A673 (cell line): ENCODE measurements at regions of chr4 and their contacts with region 1.

Region 1: GRCh38 chr4:149370785-149371420 is 444.7 kb downstream of the IQCM start:
- DNase-seq: peak; percentile 87
- H3K4me3 ChIP-seq: no peak overlapping the region
- H3K27ac ChIP-seq: no peak overlapping the region
- H3K4me1 ChIP-seq: peaks cover 6% of the 10 kb centered on the region
- H3K27me3 ChIP-seq: no peaks in the 10 kb centered on the region
- CTCF ChIP-seq: peak; percentile 65

Region 2: DNA sequence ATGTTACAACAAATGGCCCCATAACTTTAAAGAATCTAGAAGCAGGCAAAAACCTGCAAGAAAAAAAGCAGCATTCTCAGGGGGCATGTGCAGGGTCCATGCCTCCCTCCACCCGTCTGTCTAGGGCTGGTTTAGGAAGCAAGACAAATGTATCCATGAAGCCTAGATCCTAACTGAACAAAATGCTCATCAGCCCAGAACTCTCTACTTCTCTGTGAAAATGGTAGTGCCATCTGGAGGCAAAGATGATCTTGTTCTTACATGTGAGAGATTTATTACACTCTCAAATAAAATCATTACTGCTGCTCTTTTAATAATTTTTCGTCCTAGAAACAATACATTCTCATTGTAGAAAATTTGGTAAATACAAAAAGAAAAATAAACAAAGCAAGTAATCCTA is 955.4 kb before region 1 on chr4:
- CTCF ChIA-PET with region 1: no interaction called
- POLR2A ChIA-PET with region 1: no interaction called
- intact Hi-C with region 1: no loop called
- DNase-seq: peak; percentile 27
- H3K4me3 ChIP-seq: no peak overlapping the region
- H3K27ac ChIP-seq: no peak overlapping the region
- H3K4me1 ChIP-seq: no peaks in the 10 kb centered on the region
- H3K27me3 ChIP-seq: no peaks in the 10 kb centered on the region
- CTCF ChIP-seq: peak; percentile 47

Region 3: DNA sequence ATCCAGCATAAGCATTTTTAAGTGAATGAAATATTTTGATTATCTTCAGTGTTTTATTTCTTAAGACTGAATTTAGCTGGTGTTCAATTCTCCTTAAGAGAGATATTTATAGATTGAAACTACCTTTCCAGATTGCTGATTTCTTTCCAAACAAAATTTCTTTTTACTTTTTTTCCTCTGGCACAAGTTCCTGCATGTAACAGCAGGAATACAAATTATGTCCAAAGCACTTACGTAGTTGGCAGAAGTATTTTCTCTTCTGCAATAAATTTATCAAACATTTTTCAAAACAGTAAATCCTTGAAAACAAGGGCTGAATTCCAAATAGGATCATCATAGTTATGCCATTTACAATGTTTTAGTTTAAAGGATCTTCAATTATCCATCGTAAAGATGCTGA is 32.2 kb after region 1 on chr4:
- CTCF ChIA-PET with region 1: no interaction called
- POLR2A ChIA-PET with region 1: no interaction called
- intact Hi-C with region 1: no loop called
- DNase-seq: no peak
- H3K4me3 ChIP-seq: no peak overlapping the region
- H3K27ac ChIP-seq: no peak overlapping the region
- H3K4me1 ChIP-seq: no peaks in the 10 kb centered on the region
- H3K27me3 ChIP-seq: no peaks in the 10 kb centered on the region
- CTCF ChIP-seq: no peak

Region 4: GRCh38 chr4:149549911-149550310 is 179.0 kb after region 1 on chr4:
- CTCF ChIA-PET with region 1: no interaction called
- POLR2A ChIA-PET with region 1: no interaction called
- intact Hi-C with region 1: loop called (anchors 5 kb)
- DNase-seq: peak; percentile 67
- H3K4me3 ChIP-seq: no peak overlapping the region
- H3K27ac ChIP-seq: no peak overlapping the region
- H3K4me1 ChIP-seq: peaks cover 36% of the 10 kb centered on the region
- H3K27me3 ChIP-seq: no peaks in the 10 kb centered on the region
- CTCF ChIP-seq: peak; percentile 63

Region 5: GRCh38 chr4:149645790-149646189 is 274.9 kb after region 1 on chr4:
- CTCF ChIA-PET with region 1: no interaction called
- POLR2A ChIA-PET with region 1: no interaction called
- intact Hi-C with region 1: loop called (anchors 10 kb)
- DNase-seq: peak; percentile 28
- H3K4me3 ChIP-seq: no peak overlapping the region
- H3K27ac ChIP-seq: no peak overlapping the region
- H3K4me1 ChIP-seq: no peaks in the 10 kb centered on the region
- H3K27me3 ChIP-seq: no peaks in the 10 kb centered on the region
- CTCF ChIP-seq: peak; percentile 44

Region 6: GRCh38 chr4:149741186-149741831 is 370.4 kb after region 1 on chr4:
- CTCF ChIA-PET with region 1: no interaction called
- POLR2A ChIA-PET with region 1: no interaction called
- intact Hi-C with region 1: loop called (anchors 10 kb)
- DNase-seq: no peak
- H3K4me3 ChIP-seq: no peak overlapping the region
- H3K27ac ChIP-seq: no peak overlapping the region
- H3K4me1 ChIP-seq: peaks cover 7% of the 10 kb centered on the region
- H3K27me3 ChIP-seq: no peaks in the 10 kb centered on the region
- CTCF ChIP-seq: no peak